ENCODE measurements at regions of chr15 and their contacts with region 1.

Region 1: DNA sequence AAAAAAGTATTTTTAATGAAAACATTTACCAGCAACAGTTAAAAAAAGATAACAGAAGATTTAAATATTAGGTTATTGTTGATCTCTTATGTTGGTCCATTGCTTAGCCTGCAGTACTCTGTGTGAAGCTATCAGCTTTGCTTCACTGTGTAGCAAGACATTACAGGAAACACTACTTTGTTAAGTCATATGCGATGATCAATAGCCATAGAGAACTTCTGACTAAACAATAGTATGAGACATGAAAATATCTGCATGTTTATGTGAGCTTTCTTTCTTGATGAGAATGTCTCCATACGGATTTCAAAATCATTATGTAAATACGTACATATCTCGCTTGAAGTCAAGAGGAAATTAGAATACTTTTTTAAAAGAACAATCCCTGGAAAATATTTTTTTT is 27.0 kb upstream of the CAPN3 start:
- DNase-seq: no peak
- H3K4me3 ChIP-seq: no peak overlapping the region
- H3K27ac ChIP-seq: no peak overlapping the region
- H3K4me1 ChIP-seq: no peaks in the 10 kb centered on the region
- H3K27me3 ChIP-seq: no peaks in the 10 kb centered on the region
- CTCF ChIP-seq: no peak

Region 2: DNA sequence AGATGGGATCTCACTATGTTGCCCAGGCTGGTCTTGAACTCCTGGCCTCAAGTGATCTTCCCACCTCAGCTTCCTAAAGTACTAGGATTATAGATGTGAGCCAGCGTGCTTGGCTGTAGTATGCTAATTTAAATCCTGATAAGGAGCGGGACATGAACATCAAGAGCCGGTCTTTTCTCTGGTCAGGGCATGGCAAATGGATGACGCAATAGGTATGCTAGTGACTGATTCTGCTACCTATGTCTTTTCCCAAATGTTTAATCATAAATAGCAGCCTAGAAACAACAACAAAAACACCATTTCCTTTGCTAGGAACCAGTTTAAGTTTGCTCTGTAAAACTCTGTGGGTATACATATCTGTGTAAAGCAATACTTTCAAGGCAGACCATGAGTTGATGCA is 307.8 kb after region 1 on chr15:
- CTCF ChIA-PET with region 1: no interaction called
- POLR2A ChIA-PET with region 1: interaction called, 10 read pairs
- intact Hi-C with region 1: no loop called
- DNase-seq: no peak
- H3K4me3 ChIP-seq: no peak overlapping the region
- H3K27ac ChIP-seq: no peak overlapping the region
- H3K4me1 ChIP-seq: no peaks in the 10 kb centered on the region
- H3K27me3 ChIP-seq: no peaks in the 10 kb centered on the region
- CTCF ChIP-seq: no peak